Calu3 (cell line): ENCODE measurements at regions of chr4 and their contacts with region 1.

Region 1: DNA sequence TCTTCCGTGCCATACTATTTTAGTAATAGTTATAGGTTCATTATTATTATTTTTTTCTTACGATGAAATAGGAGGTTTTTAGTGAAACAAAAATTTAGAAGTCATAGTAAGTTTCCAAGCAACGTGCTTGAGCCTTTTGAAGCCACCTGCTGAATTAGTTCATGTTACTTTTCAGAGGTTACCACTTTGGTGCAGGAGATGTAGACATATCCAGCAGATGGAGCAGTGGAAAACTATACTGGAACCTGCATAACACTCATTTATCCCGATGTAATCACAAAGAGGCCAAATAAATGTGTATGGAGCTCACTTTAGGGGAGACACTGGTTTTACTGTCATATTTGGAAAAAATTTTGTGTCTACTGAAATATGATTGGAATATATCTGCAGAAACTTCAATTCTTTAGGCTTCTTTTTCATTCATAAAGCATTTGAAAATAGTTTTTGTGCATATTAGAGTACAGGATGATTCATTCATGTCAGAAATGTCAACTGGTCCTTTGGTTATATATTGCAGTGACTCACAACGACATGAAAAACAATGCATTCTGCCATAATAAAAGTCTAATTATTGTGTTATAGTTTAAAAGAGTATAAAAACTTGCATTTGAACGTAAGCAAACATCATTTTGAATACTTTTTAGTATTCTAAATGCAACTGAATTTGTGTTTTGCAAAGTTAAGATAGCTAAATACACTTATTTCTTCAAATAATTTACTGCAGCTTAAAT is 2182.9 kb upstream of the TENM3 start:
- DNase-seq: no peak
- H3K4me3 Mint-ChIP-seq: no peak overlapping the region
- H3K27ac Mint-ChIP-seq: no peak overlapping the region
- H3K4me1 Mint-ChIP-seq: no peaks in the 10 kb centered on the region
- H3K27me3 Mint-ChIP-seq: no peaks in the 10 kb centered on the region
- CTCF ChIP-seq: no peak

Region 2: GRCh38 chr4:180148737-180149136 is 88.4 kb after region 1 on chr4:
- CTCF ChIA-PET with region 1: no interaction called
- intact Hi-C with region 1: loop called (anchors 5 kb)
- DNase-seq: no peak
- H3K4me3 Mint-ChIP-seq: no peak overlapping the region
- H3K27ac Mint-ChIP-seq: no peak overlapping the region
- H3K4me1 Mint-ChIP-seq: no peaks in the 10 kb centered on the region
- H3K27me3 Mint-ChIP-seq: no peaks in the 10 kb centered on the region
- CTCF ChIP-seq: no peak

Region 3: DNA sequence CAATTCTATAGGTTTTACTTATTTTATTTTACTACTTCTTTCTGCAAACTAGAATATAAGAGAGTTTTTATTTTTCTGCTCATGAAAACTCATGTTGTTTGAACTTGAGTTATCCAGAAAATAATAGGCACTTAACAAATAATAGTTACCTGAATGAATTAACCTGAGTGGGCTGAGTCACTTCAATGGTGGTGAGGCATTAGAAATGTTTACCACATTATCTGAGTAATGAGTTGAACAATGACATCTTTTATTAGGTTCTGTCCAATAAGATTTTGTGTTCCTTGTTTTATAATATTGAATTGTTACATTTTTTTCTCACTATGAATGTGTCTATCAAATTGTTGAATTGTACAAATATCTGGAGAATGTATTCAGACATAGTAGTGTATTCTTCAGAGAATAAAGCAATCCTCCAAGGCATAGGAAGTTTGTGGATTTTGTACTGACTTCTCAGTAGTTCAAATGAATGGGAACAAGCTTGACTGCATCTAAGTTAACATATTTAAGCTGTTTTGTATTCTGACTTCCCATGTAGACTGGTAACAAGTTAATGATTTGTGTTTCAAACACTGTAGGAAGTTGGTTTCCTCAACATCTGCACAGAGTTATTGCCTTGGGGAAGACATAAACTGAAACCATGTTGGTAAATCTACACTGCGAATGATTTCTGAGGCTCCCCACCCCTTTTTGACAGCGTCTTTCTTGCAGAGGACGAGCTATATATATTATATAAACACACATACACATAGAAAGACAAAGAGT is 374.0 kb after region 1 on chr4:
- CTCF ChIA-PET with region 1: no interaction called
- intact Hi-C with region 1: loop called (anchors 10 kb)
- DNase-seq: no peak
- H3K4me3 Mint-ChIP-seq: peak overlapping the region; percentile 28
- H3K27ac Mint-ChIP-seq: peak overlapping the region; percentile 45
- H3K4me1 Mint-ChIP-seq: no peaks in the 10 kb centered on the region
- H3K27me3 Mint-ChIP-seq: no peaks in the 10 kb centered on the region
- CTCF ChIP-seq: no peak